ENCODE measurements at regions of chr3 and their contacts with region 1.

Region 1: GRCh38 chr3:159102001-159102400 is 300.1 kb downstream of the MFSD1 start:
- DNase-seq: no peak
- H3K4me3 ChIP-seq: no peak overlapping the region
- H3K27ac ChIP-seq: no peak overlapping the region
- H3K4me1 ChIP-seq: no peaks in the 10 kb centered on the region
- H3K27me3 ChIP-seq: no peaks in the 10 kb centered on the region
- CTCF ChIP-seq: no peak
- EP300 ChIP-seq: no peak
- POLR2A ChIP-seq: no peak

Region 2: DNA sequence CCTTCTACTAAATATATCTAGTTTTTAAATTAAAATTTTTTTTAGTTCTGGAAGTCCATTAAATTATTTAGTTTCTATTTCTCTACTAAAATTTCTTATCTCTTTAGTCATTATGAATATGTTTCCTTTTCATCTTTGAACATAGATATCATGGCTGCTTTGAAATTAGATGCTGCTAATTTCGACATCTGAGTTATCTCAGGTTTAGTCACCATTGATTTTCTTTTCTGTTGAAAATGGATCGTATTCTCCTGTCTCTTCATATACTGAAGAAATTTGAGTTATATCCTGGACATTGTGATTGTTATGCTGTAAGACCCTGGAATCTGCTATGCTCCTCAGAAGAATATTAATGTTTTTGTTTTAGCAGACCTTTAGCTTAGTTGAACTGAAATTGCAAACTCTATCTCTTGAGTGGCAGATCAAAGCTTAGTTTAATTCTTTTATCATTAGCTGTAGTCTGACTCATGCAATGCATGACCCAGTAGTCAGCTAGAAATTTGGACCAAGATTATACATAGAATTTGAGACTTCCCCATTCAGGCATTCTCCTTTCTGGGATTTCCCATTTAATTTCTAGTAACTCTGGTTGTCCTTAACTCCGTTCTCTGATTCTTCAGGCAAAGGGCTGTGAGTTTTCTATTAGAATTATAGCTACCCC is 446.8 kb after region 1 on chr3:
- intact Hi-C with region 1: no loop called
- DNase-seq: no peak
- H3K4me3 ChIP-seq: no peak overlapping the region
- H3K27ac ChIP-seq: no peak overlapping the region
- H3K4me1 ChIP-seq: no peaks in the 10 kb centered on the region
- H3K27me3 ChIP-seq: no peaks in the 10 kb centered on the region
- CTCF ChIP-seq: no peak
- EP300 ChIP-seq: no peak
- POLR2A ChIP-seq: no peak

Region 3: DNA sequence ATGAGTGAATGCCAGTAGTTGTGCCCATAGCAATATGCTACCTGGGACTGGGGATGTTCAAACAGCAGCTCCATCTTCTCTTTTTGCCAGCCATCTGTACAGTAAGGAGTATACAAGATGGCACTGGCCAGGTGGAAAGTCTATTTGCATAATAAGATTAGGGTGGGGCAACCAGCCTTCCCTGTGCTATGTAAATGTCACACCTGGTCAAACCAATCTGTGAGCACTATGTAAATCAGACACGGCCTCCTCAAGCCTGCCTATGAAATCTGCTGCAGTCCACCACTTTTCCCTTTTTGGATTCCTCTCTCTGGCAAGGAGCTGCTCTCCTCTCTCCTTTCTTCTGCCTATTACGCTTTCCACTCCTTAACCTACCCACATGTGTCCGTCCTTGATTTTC is 1176.2 kb after region 1 on chr3:
- intact Hi-C with region 1: loop called in 1 of 4 experiments (anchors 5 kb)
- DNase-seq: no peak
- H3K4me3 ChIP-seq: no peak overlapping the region
- H3K27ac ChIP-seq: no peak overlapping the region
- H3K4me1 ChIP-seq: no peaks in the 10 kb centered on the region
- H3K27me3 ChIP-seq: no peaks in the 10 kb centered on the region
- CTCF ChIP-seq: no peak
- EP300 ChIP-seq: no peak
- POLR2A ChIP-seq: no peak

Measured in ovary (tissue), 10 donors.